Sigmoid colon (tissue), 7 donors: ENCODE measurements at regions of chrX and their contacts with region 1.

Region 1: GRCh38 chrX:11787564-11787963 is 29.5 kb downstream of the MSL3 start:
- DNase-seq: peak; percentile 80
- H3K4me3 ChIP-seq: peak overlapping the region in 3 of 4 donors; percentile 9 to 30 (median 21)
- H3K27ac ChIP-seq: no peak overlapping the region
- H3K4me1 ChIP-seq: no peaks in the 10 kb centered on the region
- H3K27me3 ChIP-seq: no peaks in the 10 kb centered on the region
- CTCF ChIP-seq: peak; percentile 8 to 58 (median 18)
- EP300 ChIP-seq: no peak
- POLR2A ChIP-seq: no peak

Region 2: DNA sequence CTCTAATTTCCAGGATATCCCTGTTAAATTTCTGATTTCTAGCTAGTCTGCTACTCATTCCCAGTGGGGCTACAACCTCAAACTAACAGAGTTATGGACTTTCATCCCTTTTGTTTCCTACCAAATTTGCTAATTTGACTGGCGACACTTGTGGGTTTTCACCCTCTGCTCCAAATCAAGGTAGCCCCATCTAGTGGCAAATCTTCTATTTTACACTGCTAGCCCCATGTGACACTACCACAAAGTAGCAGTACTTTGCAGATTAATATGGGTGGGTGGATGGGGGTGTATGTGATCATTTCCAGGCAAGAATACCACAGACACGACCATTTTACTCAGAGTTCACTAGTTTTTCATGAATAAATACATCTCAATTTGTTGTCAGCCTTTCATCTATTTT is 120.8 kb after region 1 on chrX:
- intact Hi-C with region 1: loop called (anchors 10 kb)
- DNase-seq: no peak
- H3K4me3 ChIP-seq: no peak overlapping the region
- H3K27ac ChIP-seq: no peak overlapping the region
- H3K4me1 ChIP-seq: no peaks in the 10 kb centered on the region
- H3K27me3 ChIP-seq: no peaks in the 10 kb centered on the region
- CTCF ChIP-seq: no peak
- EP300 ChIP-seq: no peak
- POLR2A ChIP-seq: no peak

Region 3: GRCh38 chrX:12701628-12702027 is 914.1 kb after region 1 on chrX:
- intact Hi-C with region 1: loop called (anchors 5 kb)
- DNase-seq: peak; percentile 73
- H3K4me3 ChIP-seq: no peak overlapping the region
- H3K27ac ChIP-seq: no peak overlapping the region
- H3K4me1 ChIP-seq: no peaks in the 10 kb centered on the region
- H3K27me3 ChIP-seq: no peaks in the 10 kb centered on the region
- CTCF ChIP-seq: peak in 2 of 4 experiments; percentile 47
- EP300 ChIP-seq: no peak
- POLR2A ChIP-seq: no peak